ENCODE measurements at regions of chr14 and their contacts with region 1.

Region 1: DNA sequence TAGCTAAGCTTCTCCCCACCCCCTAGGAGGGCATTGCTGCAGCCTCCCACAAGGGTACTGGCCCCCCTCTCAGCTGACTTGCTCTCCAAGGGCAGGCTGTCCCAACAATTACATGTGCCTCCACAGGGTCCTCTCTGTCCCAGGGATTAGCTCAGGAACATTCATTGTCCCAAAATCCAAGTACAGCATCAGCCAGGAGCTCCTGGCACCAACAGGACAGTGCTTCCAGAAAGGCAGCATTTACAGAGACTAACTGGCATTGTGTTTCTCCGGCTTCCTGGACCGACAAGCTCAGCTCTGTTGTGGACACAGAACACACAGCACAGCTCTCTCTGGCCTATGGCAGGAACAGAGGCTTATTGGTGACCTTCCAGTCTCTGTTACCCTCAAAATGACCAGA is 21.7 kb downstream of the ABCD4 start:
- DNase-seq: no peak
- H3K4me3 ChIP-seq: no peak overlapping the region
- H3K27ac ChIP-seq: no peak overlapping the region
- H3K4me1 ChIP-seq: peaks cover under 1% of the 10 kb centered on the region
- H3K27me3 ChIP-seq: no peaks in the 10 kb centered on the region
- CTCF ChIP-seq: no peak

Region 2: DNA sequence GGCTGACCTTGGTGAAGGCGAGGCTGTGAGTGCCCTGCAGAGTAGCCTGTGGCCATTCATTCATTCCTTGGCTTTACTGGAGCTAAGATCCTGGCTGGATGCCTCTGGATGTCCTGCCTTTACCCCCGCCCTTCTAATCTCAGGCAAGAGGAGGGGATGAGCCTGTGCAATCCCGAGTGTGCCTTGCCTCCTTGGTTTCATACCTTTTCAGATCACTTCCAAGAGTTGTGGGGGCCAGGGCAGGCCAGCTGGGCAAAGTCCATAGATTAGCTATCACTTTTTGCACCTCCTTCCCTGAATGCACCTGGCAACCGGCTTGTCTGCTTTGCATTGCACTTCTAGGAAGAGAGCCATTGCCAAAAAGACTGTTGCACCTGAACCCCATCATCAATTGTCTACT is 68.7 kb after region 1 on chr14:
- CTCF ChIA-PET with region 1: no interaction called
- dilution Hi-C with region 1: loop called (anchors 5 kb)
- in situ Hi-C with region 1: no loop called
- intact Hi-C with region 1: no loop called
- DNase-seq: no peak
- H3K4me3 ChIP-seq: no peak overlapping the region
- H3K27ac ChIP-seq: no peak overlapping the region
- H3K4me1 ChIP-seq: no peaks in the 10 kb centered on the region
- H3K27me3 ChIP-seq: no peaks in the 10 kb centered on the region
- CTCF ChIP-seq: no peak

Region 3: DNA sequence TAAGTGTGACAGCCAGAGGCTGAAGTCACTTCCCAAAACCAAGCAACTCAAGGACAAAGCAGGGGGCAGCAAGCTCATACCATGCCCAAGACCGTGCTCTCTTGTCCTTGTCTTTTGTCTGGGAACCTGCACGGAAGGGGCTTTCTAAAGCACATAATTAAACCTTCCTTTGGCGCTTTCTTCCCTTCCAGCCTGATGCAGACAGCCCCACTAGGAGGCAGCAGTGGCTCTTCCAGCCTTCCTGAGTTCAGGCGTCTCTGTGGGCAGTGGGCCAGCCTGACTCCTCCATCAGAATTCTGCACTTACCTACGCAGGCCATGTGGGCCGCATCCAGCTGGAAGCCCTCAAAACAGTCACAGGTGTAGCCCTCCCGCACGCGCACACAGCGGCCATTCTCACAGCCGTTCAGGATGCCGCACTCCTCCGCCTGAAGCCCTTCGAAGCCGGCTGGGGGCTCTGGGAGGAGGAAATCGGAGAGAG is 220.1 kb after region 1 on chr14:
- CTCF ChIA-PET with region 1: no interaction called
- dilution Hi-C with region 1: no loop called
- in situ Hi-C with region 1: no loop called
- intact Hi-C with region 1: no loop called
- DNase-seq: peak; percentile 66
- H3K4me3 ChIP-seq: no peak overlapping the region
- H3K27ac ChIP-seq: no peak overlapping the region
- H3K4me1 ChIP-seq: peaks cover 20% of the 10 kb centered on the region
- H3K27me3 ChIP-seq: no peaks in the 10 kb centered on the region
- CTCF ChIP-seq: peak; percentile 87 to 88